ENCODE measurements at regions of chr10 and their contacts with region 1.

Region 1: DNA sequence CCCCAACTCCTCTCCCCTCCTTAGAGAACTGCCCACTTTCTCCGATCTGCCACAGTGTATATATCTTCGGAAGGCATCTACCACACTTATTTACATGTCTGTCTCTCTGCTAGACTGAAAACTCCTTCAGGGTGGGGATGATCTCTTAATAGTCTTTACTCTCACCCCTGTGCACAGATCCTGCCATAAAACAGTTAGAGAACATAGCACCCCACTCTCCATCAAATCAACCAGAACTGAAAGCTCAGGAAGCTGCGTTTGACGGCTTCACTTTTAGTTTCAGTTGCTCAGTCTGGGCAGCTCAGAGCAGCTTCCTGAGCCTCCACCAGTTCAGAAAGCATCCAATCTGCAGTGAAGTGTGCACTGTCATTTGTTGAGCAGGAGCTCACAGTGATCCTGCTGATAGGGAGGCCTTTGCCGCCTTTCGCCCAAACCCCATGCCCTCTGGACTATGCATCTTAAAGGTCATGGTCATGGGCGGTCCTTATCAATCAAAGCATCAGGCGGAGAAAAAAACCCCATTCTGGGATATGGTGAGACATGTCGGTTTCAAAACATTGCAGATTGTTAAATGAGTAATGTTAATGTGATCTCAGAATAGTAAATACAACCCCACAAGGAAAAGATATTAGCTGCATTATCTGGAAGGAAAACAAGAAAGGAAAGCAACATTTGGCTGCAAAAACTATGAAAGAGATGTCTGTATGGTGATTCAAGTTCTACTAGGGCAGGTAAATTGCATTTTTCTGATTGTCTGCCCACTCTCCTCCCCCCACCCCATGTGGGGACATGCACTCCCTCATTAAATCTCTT is 167.1 kb upstream of the ADO start:
- DNase-seq: peak; percentile 75
- H3K4me3 Mint-ChIP-seq: no peak overlapping the region
- H3K27ac Mint-ChIP-seq: no peak overlapping the region
- H3K4me1 Mint-ChIP-seq: peaks cover 37% of the 10 kb centered on the region
- H3K27me3 Mint-ChIP-seq: no peaks in the 10 kb centered on the region

Region 2: DNA sequence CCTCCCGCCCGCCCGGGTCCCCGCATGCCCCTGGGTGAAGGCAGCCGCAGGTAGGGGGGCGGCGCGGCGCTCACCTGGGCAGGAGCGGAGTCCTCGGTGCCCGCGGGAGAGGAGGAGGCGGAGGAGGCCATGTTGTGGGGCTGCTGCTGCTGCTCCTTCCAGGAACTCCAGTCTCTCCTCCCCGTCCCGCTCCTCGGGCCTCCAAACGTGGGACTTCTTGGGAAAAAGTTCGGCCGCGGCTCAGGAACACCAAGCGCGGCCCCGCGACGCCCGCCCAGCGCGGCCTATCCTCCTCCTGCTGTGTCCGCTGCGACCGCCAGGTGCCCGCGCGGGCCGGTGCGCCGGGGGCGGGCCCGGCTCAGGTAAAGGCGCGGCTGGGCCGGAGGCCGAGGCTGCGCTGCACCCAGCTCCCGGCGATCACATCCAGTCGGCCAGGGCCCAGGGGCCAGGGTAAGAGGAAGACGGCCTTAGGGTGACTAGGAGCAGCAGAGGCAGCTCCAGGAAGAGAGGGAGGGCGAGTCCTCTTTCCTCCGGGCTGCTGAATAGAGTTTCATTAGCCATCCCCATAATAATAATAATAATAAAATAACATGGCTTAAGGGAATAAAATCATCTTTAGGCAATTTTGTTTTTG is 1904.1 kb before region 1 on chr10:
- intact Hi-C with region 1: loop called (anchors 5 kb)
- DNase-seq: peak; percentile 28
- H3K4me3 Mint-ChIP-seq: no peak overlapping the region
- H3K27ac Mint-ChIP-seq: no peak overlapping the region
- H3K4me1 Mint-ChIP-seq: peaks cover 31% of the 10 kb centered on the region
- H3K27me3 Mint-ChIP-seq: peaks cover 4% of the 10 kb centered on the region

Region 3: GRCh38 chr10:61903221-61903927 is 734.1 kb before region 1 on chr10:
- intact Hi-C with region 1: loop called (anchors 10 kb)
- DNase-seq: peak; percentile 68
- H3K4me3 Mint-ChIP-seq: peak overlapping the region; percentile 95
- H3K27ac Mint-ChIP-seq: peak overlapping the region; percentile 93
- H3K4me1 Mint-ChIP-seq: peaks cover 40% of the 10 kb centered on the region
- H3K27me3 Mint-ChIP-seq: no peaks in the 10 kb centered on the region

Region 4: GRCh38 chr10:62459072-62459471 is 178.4 kb before region 1 on chr10:
- intact Hi-C with region 1: no loop called
- DNase-seq: no peak
- H3K4me3 Mint-ChIP-seq: no peak overlapping the region
- H3K27ac Mint-ChIP-seq: no peak overlapping the region
- H3K4me1 Mint-ChIP-seq: peaks cover 13% of the 10 kb centered on the region
- H3K27me3 Mint-ChIP-seq: peaks cover 8% of the 10 kb centered on the region

Region 5: GRCh38 chr10:62647375-62648092 is 10.1 kb after region 1 on chr10:
- intact Hi-C with region 1: loop called (anchors 1 kb)
- DNase-seq: no peak
- H3K4me3 Mint-ChIP-seq: no peak overlapping the region
- H3K27ac Mint-ChIP-seq: peak overlapping the region; percentile 39
- H3K4me1 Mint-ChIP-seq: peaks cover 58% of the 10 kb centered on the region
- H3K27me3 Mint-ChIP-seq: no peaks in the 10 kb centered on the region

Region 6: DNA sequence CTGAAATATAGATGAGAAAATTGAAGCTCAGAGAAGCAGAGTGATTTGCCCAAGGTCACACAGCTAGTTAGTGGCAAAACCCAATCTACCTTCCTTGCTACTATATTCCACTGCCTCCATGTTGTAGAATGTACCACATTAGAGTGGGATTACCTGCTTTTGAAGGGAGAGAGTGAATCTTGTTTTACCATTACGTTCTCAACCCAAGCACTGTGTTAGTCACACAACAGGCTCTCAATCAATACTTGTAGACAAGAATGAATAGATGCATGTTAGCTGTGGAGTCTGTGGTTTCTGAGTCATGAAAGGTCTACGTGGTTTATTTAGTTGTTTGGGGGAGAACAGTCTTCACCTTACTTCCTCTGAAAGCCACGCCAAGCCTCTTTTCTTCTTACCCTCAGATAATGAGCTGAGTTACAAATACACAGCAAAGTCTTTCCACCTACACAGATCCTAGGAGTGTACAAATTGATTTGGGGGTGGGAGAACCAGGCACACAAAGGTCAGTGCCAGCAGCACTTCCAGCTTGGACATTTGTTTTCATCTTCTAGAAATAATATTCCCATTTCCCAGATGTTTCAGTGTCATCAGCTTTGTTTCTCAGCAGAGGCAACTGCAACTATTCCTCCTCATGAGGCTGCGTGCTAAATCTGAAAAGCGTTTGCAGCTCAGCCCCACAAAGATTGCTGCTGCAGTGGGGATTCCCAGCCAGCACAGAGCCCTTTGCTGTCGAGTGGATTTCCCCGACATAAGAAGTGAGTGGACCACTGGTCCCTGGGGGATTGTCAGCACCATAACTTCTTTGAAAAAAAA is 95.6 kb after region 1 on chr10:
- intact Hi-C with region 1: loop called (anchors 1 kb)
- DNase-seq: peak; percentile 51
- H3K4me3 Mint-ChIP-seq: peak overlapping the region; percentile 56
- H3K27ac Mint-ChIP-seq: no peak overlapping the region
- H3K4me1 Mint-ChIP-seq: peaks cover 23% of the 10 kb centered on the region
- H3K27me3 Mint-ChIP-seq: no peaks in the 10 kb centered on the region